Uterus (tissue), 4 donors: ENCODE measurements at regions of chr1 and their contacts with region 1.

Region 1: GRCh38 chr1:206725109-206725963 is 40.6 kb downstream of the MAPKAPK2 start:
- DNase-seq: no peak
- H3K4me3 ChIP-seq: no peak overlapping the region
- H3K27ac ChIP-seq: no peak overlapping the region
- H3K4me1 ChIP-seq: peaks cover 0 to 14% of the 10 kb centered on the region in 2 donors
- H3K27me3 ChIP-seq: no peaks in the 10 kb centered on the region
- CTCF ChIP-seq: peak in 3 of 4 experiments; percentile 13 to 31 (median 16)
- POLR2A ChIP-seq: no peak

Region 2: GRCh38 chr1:206628916-206629315 is 96.4 kb before region 1 on chr1:
- intact Hi-C with region 1: loop called (anchors 10 kb)
- DNase-seq: no peak
- H3K4me3 ChIP-seq: no peak overlapping the region
- H3K27ac ChIP-seq: no peak overlapping the region
- H3K4me1 ChIP-seq: no peaks in the 10 kb centered on the region
- H3K27me3 ChIP-seq: no peaks in the 10 kb centered on the region
- CTCF ChIP-seq: no peak
- POLR2A ChIP-seq: no peak

Region 3: GRCh38 chr1:206792939-206793607 is 67.7 kb after region 1 on chr1:
- intact Hi-C with region 1: no loop called
- DNase-seq: no peak
- H3K4me3 ChIP-seq: no peak overlapping the region
- H3K27ac ChIP-seq: no peak overlapping the region
- H3K4me1 ChIP-seq: no peaks in the 10 kb centered on the region
- H3K27me3 ChIP-seq: no peaks in the 10 kb centered on the region
- CTCF ChIP-seq: no peak
- POLR2A ChIP-seq: no peak

Region 4: DNA sequence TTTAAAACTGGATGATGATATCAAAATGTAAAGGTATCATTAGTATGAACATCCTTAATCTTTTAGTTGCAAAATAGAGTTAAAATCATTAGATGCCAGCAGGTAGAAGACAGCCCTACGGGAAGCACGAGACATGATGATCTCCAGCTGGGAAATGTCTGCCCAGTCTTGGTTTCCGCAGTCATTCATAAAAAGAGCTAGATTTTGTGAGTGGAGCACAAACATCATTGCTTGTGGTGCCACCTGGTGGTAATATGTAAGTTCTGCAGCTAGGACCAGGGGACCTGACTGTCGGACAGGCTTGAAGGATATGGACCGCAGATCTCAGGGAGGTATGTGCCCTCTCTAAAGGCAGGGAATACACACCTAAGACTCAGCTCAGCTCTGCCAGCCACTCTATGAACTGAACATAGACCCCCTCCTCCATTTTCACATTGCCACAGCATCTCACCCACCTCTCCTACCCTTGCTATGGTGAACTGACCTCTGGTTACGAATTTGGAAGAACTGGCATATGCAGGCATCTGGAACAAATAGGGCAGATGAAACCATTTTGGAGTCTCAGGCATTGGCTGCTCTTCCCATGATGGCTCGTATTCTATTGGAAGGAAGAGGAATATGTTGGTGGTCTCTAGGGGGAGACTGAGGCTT is 187.2 kb after region 1 on chr1:
- intact Hi-C with region 1: loop called (anchors 5 kb)
- DNase-seq: peak; percentile 69 to 76
- H3K4me3 ChIP-seq: no peak overlapping the region
- H3K27ac ChIP-seq: no peak overlapping the region
- H3K4me1 ChIP-seq: peaks cover 0 to 7% of the 10 kb centered on the region in 2 donors
- H3K27me3 ChIP-seq: no peaks in the 10 kb centered on the region
- CTCF ChIP-seq: peak; percentile 79 to 88 (median 86)
- POLR2A ChIP-seq: no peak